Lower lobe of right lung (tissue), 2 donors: ENCODE measurements at regions of chr17 and their contacts with region 1.

Region 1: DNA sequence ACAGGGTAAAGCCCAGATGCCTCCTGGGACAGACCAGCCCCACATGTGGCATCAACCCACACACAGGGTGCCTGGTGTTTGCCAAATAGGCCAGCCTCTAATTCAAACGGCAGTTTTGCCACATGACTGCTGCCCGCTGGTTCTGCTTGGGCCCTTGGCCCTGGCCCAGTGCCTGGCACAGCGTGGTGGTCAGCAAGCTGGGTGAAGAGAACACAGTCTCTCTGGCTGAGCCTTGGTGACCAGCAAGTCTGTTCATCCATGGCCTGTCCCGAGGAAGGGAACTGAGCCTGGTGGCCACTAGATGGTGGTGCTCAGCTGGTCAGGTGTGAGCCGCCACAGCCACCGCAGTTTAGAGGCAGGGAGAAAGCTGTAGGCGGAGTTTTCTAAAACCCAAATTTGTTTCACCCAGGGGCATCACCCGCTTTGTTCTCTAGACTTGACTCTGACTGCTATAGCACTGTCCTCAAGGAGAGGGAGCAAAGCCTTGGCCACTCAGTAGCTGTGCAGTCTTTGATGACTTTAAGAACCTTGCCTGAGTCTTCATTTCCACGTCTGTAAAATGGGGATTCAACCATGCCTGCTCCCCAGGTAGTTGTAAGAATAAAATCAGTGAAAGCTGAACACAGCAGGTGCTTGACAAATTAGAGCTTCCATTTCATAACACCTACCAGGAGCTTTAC is 4.7 kb upstream of the GFAP start:
- DNase-seq: peak; percentile 82
- ATAC-seq: peak; percentile 89 to 91
- H3K4me3 ChIP-seq: no peak overlapping the region
- H3K27ac ChIP-seq: no peak overlapping the region
- H3K4me1 ChIP-seq: no peaks in the 10 kb centered on the region
- H3K27me3 ChIP-seq: peaks cover 10% of the 10 kb centered on the region
- CTCF ChIP-seq: peak; percentile 88

Region 2: DNA sequence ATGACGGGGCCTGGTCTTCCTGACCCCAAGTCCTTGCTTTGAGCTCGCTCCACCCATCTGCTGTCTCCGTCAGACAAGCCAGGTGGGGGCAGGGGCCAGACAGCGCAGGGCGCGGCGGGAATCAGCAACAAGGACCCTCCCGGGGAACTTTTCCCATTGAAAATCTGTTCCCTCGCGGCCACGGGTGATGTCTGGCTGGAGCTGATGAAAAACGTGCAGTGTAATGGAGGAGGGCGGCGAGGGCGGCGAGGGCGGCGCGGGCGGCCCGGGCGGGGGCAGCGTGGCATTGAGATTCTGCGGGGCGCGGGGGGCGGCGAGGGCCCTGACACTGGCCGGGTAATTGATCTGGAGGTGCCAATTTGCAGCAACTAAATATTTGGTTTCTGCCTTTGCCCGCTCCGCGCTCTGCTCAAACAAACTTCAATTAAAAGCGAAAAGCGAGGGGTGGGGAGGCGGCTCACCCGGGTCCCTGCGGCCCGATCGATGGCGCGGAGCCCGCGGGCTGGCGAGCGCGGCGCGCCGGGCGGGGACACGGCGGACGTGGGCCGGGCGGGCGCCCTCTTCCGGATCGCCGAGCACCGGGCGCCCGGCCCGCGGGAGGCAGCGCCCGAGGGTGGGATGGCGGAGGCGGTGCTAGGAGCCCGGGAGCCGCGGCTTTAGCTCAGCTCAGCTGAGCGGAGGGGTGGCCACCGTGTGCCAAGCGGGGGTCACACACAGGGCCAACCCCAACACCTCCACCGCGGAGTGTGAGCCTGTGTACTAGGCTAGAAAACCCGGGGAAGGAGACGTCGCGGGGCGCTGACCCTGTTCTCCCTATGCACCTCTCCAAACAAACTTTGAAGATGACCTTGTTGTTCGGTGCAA is 99.1 kb after region 1 on chr17:
- intact Hi-C with region 1: loop called (anchors 10 kb)
- DNase-seq: peak; percentile 52
- ATAC-seq: peak; percentile 84 to 86
- H3K4me3 ChIP-seq: peak overlapping the region; percentile 59
- H3K27ac ChIP-seq: no peak overlapping the region
- H3K4me1 ChIP-seq: peaks cover 29% of the 10 kb centered on the region
- H3K27me3 ChIP-seq: peaks cover 30% of the 10 kb centered on the region
- CTCF ChIP-seq: peak; percentile 38